Right lobe of liver (tissue), 6 donors: ENCODE measurements at regions of chr15 and their contacts with region 1.

Region 1: GRCh38 chr15:98668566-98669308 is 20.4 kb downstream of the IGF1R start:
- DNase-seq: no peak
- ATAC-seq: peak in 3 of 4 donors; percentile 25 to 64 (median 54)
- H3K4me3 ChIP-seq: no peak overlapping the region
- H3K27ac ChIP-seq: no peak overlapping the region
- H3K4me1 ChIP-seq: peaks cover 0 to 9% (median 0%) of the 10 kb centered on the region in 4 donors
- H3K27me3 ChIP-seq: no peaks in the 10 kb centered on the region
- CTCF ChIP-seq: no peak
- POLR2A ChIP-seq: no peak

Region 2: GRCh38 chr15:96827981-96828380 is 1840.8 kb before region 1 on chr15:
- intact Hi-C with region 1: no loop called
- DNase-seq: no peak
- ATAC-seq: no peak
- H3K4me3 ChIP-seq: no peak overlapping the region
- H3K27ac ChIP-seq: no peak overlapping the region
- H3K4me1 ChIP-seq: no peaks in the 10 kb centered on the region
- H3K27me3 ChIP-seq: no peaks in the 10 kb centered on the region
- CTCF ChIP-seq: no peak
- POLR2A ChIP-seq: no peak

Region 3: DNA sequence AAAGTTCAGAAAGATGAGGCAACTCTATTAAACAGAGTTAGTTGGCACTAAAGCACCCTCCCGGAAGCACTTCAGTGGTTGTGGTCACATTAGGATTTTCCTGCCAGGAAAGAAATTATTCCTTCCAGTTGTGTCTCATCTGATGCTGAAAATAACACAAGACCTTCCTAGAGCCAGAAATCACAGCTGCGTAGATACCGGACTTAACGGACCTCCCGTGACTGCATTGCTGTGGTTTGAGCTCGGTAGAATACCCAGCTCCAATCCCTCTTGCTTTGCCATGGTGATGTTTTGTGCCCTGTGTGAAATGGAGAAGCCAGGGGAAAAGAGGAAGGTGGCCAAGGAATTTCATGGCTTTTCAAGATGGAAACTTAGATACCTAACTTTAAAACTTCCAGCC is 235.4 kb before region 1 on chr15:
- intact Hi-C with region 1: loop called in 1 of 2 experiments (anchors 10 kb)
- DNase-seq: no peak
- ATAC-seq: no peak
- H3K4me3 ChIP-seq: no peak overlapping the region
- H3K27ac ChIP-seq: no peak overlapping the region
- H3K4me1 ChIP-seq: no peaks in the 10 kb centered on the region
- H3K27me3 ChIP-seq: no peaks in the 10 kb centered on the region
- CTCF ChIP-seq: no peak
- POLR2A ChIP-seq: no peak

Region 4: GRCh38 chr15:98503970-98504369 is 164.8 kb before region 1 on chr15:
- intact Hi-C with region 1: loop called in 1 of 2 experiments (anchors 10 kb)
- DNase-seq: no peak
- ATAC-seq: no peak
- H3K4me3 ChIP-seq: no peak overlapping the region
- H3K27ac ChIP-seq: no peak overlapping the region
- H3K4me1 ChIP-seq: no peaks in the 10 kb centered on the region
- H3K27me3 ChIP-seq: no peaks in the 10 kb centered on the region
- CTCF ChIP-seq: no peak
- POLR2A ChIP-seq: no peak

Region 5: DNA sequence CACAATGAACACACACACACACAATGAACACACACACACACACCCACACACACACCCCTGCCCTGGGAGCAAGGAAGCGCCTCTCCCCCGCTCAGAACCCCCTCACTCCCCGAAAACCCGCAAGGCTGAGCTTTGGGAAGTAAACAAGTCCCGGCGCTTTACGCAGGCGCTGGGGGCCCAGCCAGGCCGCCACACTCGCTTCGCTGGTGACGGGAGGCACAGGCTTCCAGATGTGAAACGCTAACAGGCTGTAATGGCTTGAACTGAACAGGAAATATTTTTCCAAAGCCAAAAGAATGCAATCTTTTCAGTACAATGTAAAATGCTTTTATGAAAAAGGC is 143.1 kb before region 1 on chr15:
- intact Hi-C with region 1: loop called in 1 of 2 experiments (anchors 10 kb)
- DNase-seq: no peak
- ATAC-seq: no peak
- H3K4me3 ChIP-seq: no peak overlapping the region
- H3K27ac ChIP-seq: no peak overlapping the region
- H3K4me1 ChIP-seq: no peaks in the 10 kb centered on the region
- H3K27me3 ChIP-seq: no peaks in the 10 kb centered on the region
- CTCF ChIP-seq: no peak
- POLR2A ChIP-seq: no peak

Region 6: GRCh38 chr15:98719137-98719740 is 50.5 kb after region 1 on chr15:
- intact Hi-C with region 1: no loop called
- DNase-seq: no peak
- ATAC-seq: no peak
- H3K4me3 ChIP-seq: no peak overlapping the region
- H3K27ac ChIP-seq: no peak overlapping the region
- H3K4me1 ChIP-seq: no peaks in the 10 kb centered on the region
- H3K27me3 ChIP-seq: no peaks in the 10 kb centered on the region
- CTCF ChIP-seq: no peak
- POLR2A ChIP-seq: no peak